Esophagus muscularis mucosa (tissue), 4 donors: ENCODE measurements at regions of chrX and their contacts with region 1.

Region 1: GRCh38 chrX:118577041-118577440 is 81.4 kb downstream of the DOCK11 start:
- DNase-seq: no peak
- H3K4me3 ChIP-seq: no peak overlapping the region
- H3K27ac ChIP-seq: peak overlapping the region in 2 of 4 donors; percentile 27 to 30
- H3K4me1 ChIP-seq: no peaks in the 10 kb centered on the region
- H3K27me3 ChIP-seq: no peaks in the 10 kb centered on the region
- CTCF ChIP-seq: no peak
- EP300 ChIP-seq: no peak
- POLR2A ChIP-seq: no peak

Region 2: DNA sequence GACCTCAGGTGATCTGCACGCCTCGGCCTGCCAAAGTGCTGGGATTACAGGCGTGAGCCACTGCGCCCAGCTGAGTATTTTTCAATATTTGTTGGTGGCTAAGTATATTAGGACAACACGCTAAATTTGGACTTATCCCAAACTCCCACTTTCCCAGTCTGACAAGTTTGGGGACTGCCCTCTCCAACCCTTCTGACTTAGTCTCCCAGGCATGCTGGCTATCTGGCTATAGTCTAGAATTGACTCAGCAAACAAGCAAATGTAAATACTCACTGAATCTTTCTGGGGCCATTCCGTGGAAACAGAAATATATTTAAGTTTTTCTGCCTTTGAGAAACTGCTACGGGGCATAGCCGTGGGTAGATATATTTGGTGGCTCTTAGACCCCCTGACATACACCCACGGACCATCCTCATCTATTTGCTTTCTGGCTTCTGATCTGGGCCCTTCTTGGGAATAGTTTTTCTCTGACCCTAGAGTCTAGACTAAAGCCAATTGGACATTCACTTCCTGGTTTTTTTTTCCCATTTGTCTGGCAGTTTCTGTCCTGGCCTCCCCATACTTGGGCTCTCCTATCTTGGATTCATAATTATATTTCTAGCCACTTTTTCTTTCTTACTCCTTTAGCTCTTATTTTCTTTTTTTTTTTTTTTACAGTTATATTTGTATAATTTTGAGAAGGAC is 92.7 kb before region 1 on chrX:
- intact Hi-C with region 1: no loop called
- DNase-seq: no peak
- H3K4me3 ChIP-seq: no peak overlapping the region
- H3K27ac ChIP-seq: no peak overlapping the region
- H3K4me1 ChIP-seq: no peaks in the 10 kb centered on the region
- H3K27me3 ChIP-seq: no peaks in the 10 kb centered on the region
- CTCF ChIP-seq: no peak
- EP300 ChIP-seq: no peak
- POLR2A ChIP-seq: no peak

Region 3: GRCh38 chrX:118495061-118495921 is 81.8 kb before region 1 on chrX and contains the start of gene DOCK11:
- intact Hi-C with region 1: loop called (anchors 10 kb)
- DNase-seq: peak; percentile 96
- H3K4me3 ChIP-seq: peak within 1 kb of the TSS; percentile 73 to 87 (median 80)
- H3K27ac ChIP-seq: peak within 1 kb of the TSS; percentile 89 to 94 (median 90)
- H3K4me1 ChIP-seq: peaks cover 0 to 33% (median 25%) of the 10 kb centered on the region in 4 donors
- H3K27me3 ChIP-seq: peaks cover 0 to 3% (median 0%) of the 10 kb centered on the region in 4 donors
- CTCF ChIP-seq: no peak
- EP300 ChIP-seq: no peak
- POLR2A ChIP-seq: no peak
- total RNA-seq, gene DOCK11: 62.0 to 103 (median 64.7) TPM

Region 4: DNA sequence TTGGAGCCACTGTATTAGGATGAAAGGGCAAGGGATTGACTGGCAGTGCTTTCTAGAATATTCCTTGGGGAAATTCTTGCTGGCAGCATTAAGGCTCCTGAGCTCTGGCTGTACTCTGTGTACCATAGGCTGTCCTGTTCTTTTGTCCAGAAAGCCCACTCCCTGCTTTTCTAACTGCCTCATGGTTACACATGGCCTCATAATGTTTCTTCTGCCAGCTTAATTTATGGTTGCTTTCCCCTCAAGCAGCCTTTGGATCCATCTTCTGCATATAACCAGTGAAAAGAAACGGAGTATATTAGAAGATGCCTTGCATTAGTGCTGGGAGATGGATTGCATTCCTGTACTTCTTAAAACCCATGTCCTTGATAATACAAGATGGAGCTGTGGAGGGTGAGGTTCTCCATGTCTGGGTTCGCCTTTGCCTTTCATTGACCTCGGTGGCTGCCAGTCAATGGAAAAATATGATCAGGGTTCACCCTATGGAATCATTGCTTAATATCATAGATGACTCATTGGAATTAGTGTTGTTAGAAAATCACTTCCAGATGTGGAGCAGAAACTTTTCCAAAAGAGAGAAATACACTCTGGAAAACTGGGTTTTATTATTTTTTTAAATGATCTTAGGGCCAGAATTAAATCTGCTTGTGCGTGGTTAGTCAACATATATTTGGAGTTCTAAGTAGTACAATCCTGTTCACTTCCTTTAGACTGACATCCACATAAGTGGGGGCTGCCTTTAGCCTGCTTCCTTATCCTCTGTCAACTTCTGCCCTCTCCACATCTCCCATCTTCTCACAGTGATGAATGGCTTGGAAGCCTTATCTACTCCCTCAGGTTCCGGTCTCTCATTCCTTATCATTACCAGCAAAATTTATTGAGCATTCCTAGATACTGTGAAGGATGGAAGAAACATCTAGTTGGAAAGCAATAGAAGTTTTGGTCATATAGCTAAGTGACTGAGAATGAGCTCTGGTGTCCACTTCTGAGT is 56.5 kb before region 1 on chrX:
- intact Hi-C with region 1: no loop called
- DNase-seq: no peak
- H3K4me3 ChIP-seq: no peak overlapping the region
- H3K27ac ChIP-seq: peak overlapping the region; percentile 69 to 76 (median 74)
- H3K4me1 ChIP-seq: peaks cover 0 to 63% (median 43%) of the 10 kb centered on the region in 4 donors
- H3K27me3 ChIP-seq: no peaks in the 10 kb centered on the region
- CTCF ChIP-seq: no peak
- EP300 ChIP-seq: no peak
- POLR2A ChIP-seq: no peak